ENCODE measurements at regions of chr9 and their contacts with region 1.

Region 1: GRCh38 chr9:101977614-101978210 is 239.3 kb upstream of the GRIN3A start:
- DNase-seq: no peak
- ATAC-seq: peak; percentile 73
- H3K4me3 ChIP-seq: no peak overlapping the region
- H3K27ac ChIP-seq: no peak overlapping the region
- H3K4me1 ChIP-seq: no peaks in the 10 kb centered on the region
- H3K27me3 ChIP-seq: no peaks in the 10 kb centered on the region
- CTCF ChIP-seq: peak; percentile 34 to 41 (median 37); a peak in 4 of 6 replicates
- EP300 ChIP-seq: no peak
- POLR2A ChIP-seq: no peak
- RAD21 ChIP-seq: peak; percentile 48

Region 2: GRCh38 chr9:101923451-101923850 is 54.3 kb before region 1 on chr9:
- CTCF ChIA-PET with region 1: no interaction called
- POLR2A ChIA-PET with region 1: no interaction called
- RAD21 ChIA-PET with region 1: no interaction called
- SMC1A ChIA-PET with region 1: no interaction called
- in situ Hi-C with region 1: no loop called
- intact Hi-C with region 1: no loop called
- DNase-seq: no peak
- ATAC-seq: no peak
- H3K4me3 ChIP-seq: no peak overlapping the region
- H3K27ac ChIP-seq: no peak overlapping the region
- H3K4me1 ChIP-seq: no peaks in the 10 kb centered on the region
- H3K27me3 ChIP-seq: no peaks in the 10 kb centered on the region
- CTCF ChIP-seq: no peak
- EP300 ChIP-seq: no peak
- POLR2A ChIP-seq: no peak
- RAD21 ChIP-seq: no peak

Region 3: DNA sequence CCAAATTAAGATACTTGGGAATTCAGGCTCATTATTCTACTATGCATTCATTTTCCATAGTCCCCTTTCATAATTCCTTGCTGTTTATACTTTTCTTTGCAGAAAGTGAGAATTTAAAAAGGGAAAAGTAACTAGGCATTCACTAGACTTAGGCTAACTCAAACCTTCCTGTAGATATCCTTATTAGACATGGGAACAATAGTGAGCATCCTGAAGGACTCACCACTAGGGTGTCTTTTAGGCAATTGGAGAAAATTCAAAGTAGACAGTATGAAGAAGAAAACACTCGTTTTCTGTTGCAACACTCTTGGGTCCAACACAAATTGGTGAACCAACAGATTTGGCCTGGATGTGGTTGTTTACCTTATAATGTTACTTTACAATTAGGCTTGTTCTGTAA is 26.1 kb before region 1 on chr9:
- CTCF ChIA-PET with region 1: no interaction called
- POLR2A ChIA-PET with region 1: no interaction called
- RAD21 ChIA-PET with region 1: no interaction called
- SMC1A ChIA-PET with region 1: no interaction called
- in situ Hi-C with region 1: no loop called
- intact Hi-C with region 1: no loop called
- DNase-seq: no peak
- ATAC-seq: no peak
- H3K4me3 ChIP-seq: no peak overlapping the region
- H3K27ac ChIP-seq: no peak overlapping the region
- H3K4me1 ChIP-seq: no peaks in the 10 kb centered on the region
- H3K27me3 ChIP-seq: no peaks in the 10 kb centered on the region
- CTCF ChIP-seq: no peak
- EP300 ChIP-seq: no peak
- POLR2A ChIP-seq: no peak
- RAD21 ChIP-seq: no peak

Region 4: DNA sequence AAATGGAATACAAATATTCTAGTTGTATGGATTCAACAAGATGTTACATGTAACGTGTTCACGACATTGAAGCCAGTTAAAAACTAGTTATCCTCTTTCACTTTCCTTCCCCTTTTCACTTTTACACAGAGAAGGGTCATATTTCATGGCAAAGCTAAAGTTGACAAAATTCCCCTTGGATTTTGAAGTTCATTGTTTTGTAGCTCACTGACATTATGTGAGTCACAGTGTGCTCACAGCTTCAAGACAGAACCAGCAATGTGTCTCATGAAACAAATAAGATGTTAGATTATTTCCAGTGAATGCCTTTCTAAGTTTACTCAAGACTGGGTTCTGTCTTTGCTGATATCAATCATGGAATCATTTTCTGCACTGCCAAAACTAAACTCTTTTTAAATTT is 296.2 kb after region 1 on chr9:
- CTCF ChIA-PET with region 1: no interaction called
- POLR2A ChIA-PET with region 1: no interaction called
- RAD21 ChIA-PET with region 1: no interaction called
- SMC1A ChIA-PET with region 1: no interaction called
- in situ Hi-C with region 1: no loop called
- intact Hi-C with region 1: loop called (anchors 10 kb)
- DNase-seq: no peak
- ATAC-seq: no peak
- H3K4me3 ChIP-seq: no peak overlapping the region
- H3K27ac ChIP-seq: no peak overlapping the region
- H3K4me1 ChIP-seq: no peaks in the 10 kb centered on the region
- H3K27me3 ChIP-seq: no peaks in the 10 kb centered on the region
- CTCF ChIP-seq: no peak
- EP300 ChIP-seq: no peak
- POLR2A ChIP-seq: no peak
- RAD21 ChIP-seq: no peak

Region 5: GRCh38 chr9:102434545-102434944 is 456.8 kb after region 1 on chr9:
- CTCF ChIA-PET with region 1: no interaction called
- POLR2A ChIA-PET with region 1: no interaction called
- RAD21 ChIA-PET with region 1: no interaction called
- SMC1A ChIA-PET with region 1: no interaction called
- in situ Hi-C with region 1: no loop called
- intact Hi-C with region 1: loop called (anchors 10 kb)
- DNase-seq: no peak
- ATAC-seq: no peak
- H3K4me3 ChIP-seq: no peak overlapping the region
- H3K27ac ChIP-seq: no peak overlapping the region
- H3K4me1 ChIP-seq: no peaks in the 10 kb centered on the region
- H3K27me3 ChIP-seq: no peaks in the 10 kb centered on the region
- CTCF ChIP-seq: no peak
- EP300 ChIP-seq: no peak
- POLR2A ChIP-seq: no peak
- RAD21 ChIP-seq: no peak

Measured in GM12878 (cell line).